HepG2 (cell line): ENCODE measurements at regions of chr6 and their contacts with region 1.

Region 1: DNA sequence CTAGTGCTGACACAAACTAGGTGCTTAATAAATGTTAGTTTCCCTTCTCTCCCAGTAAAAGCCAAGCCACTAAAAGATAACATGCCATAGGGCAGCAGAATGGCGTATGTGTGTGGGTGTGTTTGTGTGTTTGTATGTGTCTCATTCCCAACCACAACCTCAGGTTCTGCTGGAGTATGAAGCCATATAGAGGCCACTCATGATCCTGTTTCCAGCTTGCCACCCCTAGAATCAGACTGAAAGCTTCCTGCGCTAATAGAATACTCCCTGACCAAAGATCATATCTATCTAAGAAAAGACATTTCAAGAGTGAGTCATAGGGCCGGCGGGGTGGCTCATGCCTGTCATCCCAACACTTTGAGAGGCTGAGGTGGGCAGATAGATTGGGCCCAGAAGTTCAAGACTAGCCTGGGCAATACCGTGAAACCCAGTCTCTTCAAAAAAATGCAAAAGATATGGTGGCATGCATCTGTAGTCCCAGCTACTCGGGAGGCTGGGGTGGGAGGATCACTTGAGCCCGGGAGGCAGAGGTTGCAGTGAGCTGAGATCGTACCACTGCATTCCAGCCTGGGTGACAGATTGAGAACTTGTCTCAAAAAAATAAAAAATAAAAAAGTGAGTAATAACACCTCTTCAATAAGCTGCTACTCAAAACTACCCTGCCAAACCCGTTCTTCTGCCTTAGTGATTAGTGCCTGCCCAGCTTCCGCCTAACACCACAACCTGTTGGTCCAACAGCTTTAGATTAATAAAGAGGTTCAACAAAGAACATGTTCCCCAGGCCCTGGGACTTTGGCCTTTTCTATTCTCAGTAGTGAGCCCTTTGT is 11.8 kb upstream of the SNRPC start:
- DNase-seq: peak; percentile 72
- ATAC-seq: peak; percentile 85
- H3K4me3 ChIP-seq: peak overlapping the region; percentile 41 to 56 (median 47)
- H3K27ac ChIP-seq: peak overlapping the region; percentile 57
- H3K4me1 ChIP-seq: peaks cover 82% of the 10 kb centered on the region
- H3K27me3 ChIP-seq: no peaks in the 10 kb centered on the region
- CTCF ChIP-seq: no peak
- EP300 ChIP-seq: peak in 1 of 2 experiments; percentile 22; a peak in 1 of 4 replicates
- POLR2A ChIP-seq: no peak
- RAD21 ChIP-seq: no peak

Region 2: GRCh38 chr6:34627296-34627695 is 118.2 kb before region 1 on chr6:
- CTCF ChIA-PET with region 1: no interaction called
- POLR2A ChIA-PET with region 1: no interaction called
- in situ Hi-C with region 1: no loop called
- intact Hi-C with region 1: no loop called
- DNase-seq: no peak
- ATAC-seq: no peak
- H3K4me3 ChIP-seq: no peak overlapping the region
- H3K27ac ChIP-seq: no peak overlapping the region
- H3K4me1 ChIP-seq: peaks cover 6% of the 10 kb centered on the region
- H3K27me3 ChIP-seq: no peaks in the 10 kb centered on the region
- CTCF ChIP-seq: no peak
- EP300 ChIP-seq: no peak
- POLR2A ChIP-seq: no peak
- RAD21 ChIP-seq: no peak

Region 3: GRCh38 chr6:34709386-34709785 is 36.1 kb before region 1 on chr6:
- CTCF ChIA-PET with region 1: no interaction called
- POLR2A ChIA-PET with region 1: interaction called, 5 read pairs
- in situ Hi-C with region 1: no loop called
- intact Hi-C with region 1: loop called (anchors 5 kb)
- DNase-seq: no peak
- ATAC-seq: peak; percentile 74
- H3K4me3 ChIP-seq: peak overlapping the region in 2 of 3 experiments; percentile 21 to 22; a peak in 4 of 6 replicates
- H3K27ac ChIP-seq: no peak overlapping the region
- H3K4me1 ChIP-seq: peaks cover 45% of the 10 kb centered on the region
- H3K27me3 ChIP-seq: no peaks in the 10 kb centered on the region; a peak in 1 of 5 replicates
- CTCF ChIP-seq: no peak
- EP300 ChIP-seq: no peak
- POLR2A ChIP-seq: no peak
- RAD21 ChIP-seq: no peak

Region 4: GRCh38 chr6:34723203-34723602 is 22.3 kb before region 1 on chr6:
- CTCF ChIA-PET with region 1: no interaction called
- POLR2A ChIA-PET with region 1: interaction called, 3 read pairs
- in situ Hi-C with region 1: no loop called
- intact Hi-C with region 1: loop called (anchors 2 kb)
- DNase-seq: peak; percentile 55
- ATAC-seq: peak; percentile 47
- H3K4me3 ChIP-seq: no peak overlapping the region; a peak in 1 of 6 replicates
- H3K27ac ChIP-seq: peak overlapping the region; percentile 9
- H3K4me1 ChIP-seq: peaks cover 33% of the 10 kb centered on the region
- H3K27me3 ChIP-seq: no peaks in the 10 kb centered on the region
- CTCF ChIP-seq: no peak
- EP300 ChIP-seq: no peak
- POLR2A ChIP-seq: no peak
- RAD21 ChIP-seq: no peak

Region 5: DNA sequence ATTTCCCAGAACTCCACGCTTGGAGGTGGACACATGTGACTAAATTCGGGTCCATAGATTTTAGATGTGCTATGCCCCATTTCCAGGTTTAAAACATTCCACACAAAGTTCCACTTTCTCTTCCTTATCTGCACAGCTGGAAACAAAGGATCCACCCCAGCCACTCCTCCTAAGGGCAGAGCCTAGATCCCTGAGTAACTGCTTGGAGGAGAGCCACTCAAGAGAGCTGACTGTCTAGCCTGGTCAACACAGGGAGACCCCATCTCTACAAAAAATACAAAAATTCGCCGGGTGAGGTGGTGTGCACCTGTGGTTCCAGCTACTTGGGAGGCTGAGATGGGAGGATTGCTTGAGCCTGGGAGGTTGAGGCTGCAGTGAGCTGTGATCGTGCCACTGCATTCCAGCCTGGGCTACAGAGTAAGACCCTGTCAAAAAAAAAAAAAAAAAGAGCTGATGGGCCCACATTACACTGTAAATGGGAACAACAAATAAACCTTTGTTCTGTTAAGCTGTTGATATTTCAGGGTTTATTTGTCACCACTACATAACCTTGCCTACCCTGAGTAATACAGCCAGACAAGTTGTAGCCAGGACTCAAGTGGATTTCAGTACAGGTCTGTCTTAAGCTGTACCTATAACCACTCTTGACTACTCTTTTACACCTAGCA is 14.0 kb before region 1 on chr6:
- CTCF ChIA-PET with region 1: no interaction called
- POLR2A ChIA-PET with region 1: interaction called, 10 read pairs
- in situ Hi-C with region 1: no loop called
- intact Hi-C with region 1: no loop called
- DNase-seq: peak; percentile 75
- ATAC-seq: peak; percentile 90
- H3K4me3 ChIP-seq: peak overlapping the region in 1 of 3 experiments; percentile 24; a peak in 1 of 6 replicates
- H3K27ac ChIP-seq: peak overlapping the region; percentile 12
- H3K4me1 ChIP-seq: peaks cover 51% of the 10 kb centered on the region
- H3K27me3 ChIP-seq: no peaks in the 10 kb centered on the region
- CTCF ChIP-seq: no peak
- EP300 ChIP-seq: no peak; a peak in 1 of 4 replicates
- POLR2A ChIP-seq: no peak
- RAD21 ChIP-seq: no peak

Region 6: GRCh38 chr6:34791701-34792235 is 46.3 kb after region 1 on chr6 and contains the start of gene BLTP3A:
- CTCF ChIA-PET with region 1: no interaction called
- POLR2A ChIA-PET with region 1: interaction called, 13 read pairs
- in situ Hi-C with region 1: no loop called
- intact Hi-C with region 1: no loop called
- DNase-seq: peak; percentile 59
- ATAC-seq: peak; percentile 90
- H3K4me3 ChIP-seq: peak within 1 kb of the TSS; percentile 88 to 100 (median 95)
- H3K27ac ChIP-seq: peak within 1 kb of the TSS; percentile 96
- H3K4me1 ChIP-seq: peaks cover 59% of the 10 kb centered on the region
- H3K27me3 ChIP-seq: no peaks in the 10 kb centered on the region; a peak in 1 of 5 replicates
- CTCF ChIP-seq: no peak; the same call in 1 of the 2 replicates
- EP300 ChIP-seq: no peak
- POLR2A ChIP-seq: peak; percentile 76 to 89
- RAD21 ChIP-seq: peak; percentile 57; the same call in 1 of the 2 replicates
- total RNA-seq, gene BLTP3A: 24.0 and 39.3 TPM in 2 replicates